ENCODE measurements at regions of chr5 and their contacts with region 1.

Region 1: DNA sequence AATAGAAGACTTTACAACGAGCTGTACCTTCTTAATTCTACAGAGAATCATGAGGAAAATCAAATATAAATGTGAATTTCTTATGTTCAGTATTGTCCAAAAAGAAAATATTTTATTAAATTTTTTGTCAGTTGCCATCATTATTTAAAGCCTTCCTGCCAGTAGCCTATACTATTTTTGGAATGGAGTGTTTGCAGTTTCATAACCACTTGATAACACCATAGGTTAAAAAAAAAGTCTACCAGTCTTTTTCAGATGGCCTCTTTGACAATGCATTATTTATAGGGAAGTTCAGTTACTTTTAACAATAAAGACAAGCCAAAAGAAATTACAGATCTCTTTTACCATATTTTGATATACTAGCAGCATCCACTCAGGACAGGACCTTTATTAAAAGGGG is 80.3 kb upstream of the CCDC152 start:
- DNase-seq: no peak
- ATAC-seq: no peak
- H3K4me3 ChIP-seq: no peak overlapping the region
- H3K27ac ChIP-seq: peak overlapping the region; percentile 56
- H3K4me1 ChIP-seq: peaks cover 19% of the 10 kb centered on the region
- H3K27me3 ChIP-seq: no peaks in the 10 kb centered on the region
- CTCF ChIP-seq: no peak

Region 2: DNA sequence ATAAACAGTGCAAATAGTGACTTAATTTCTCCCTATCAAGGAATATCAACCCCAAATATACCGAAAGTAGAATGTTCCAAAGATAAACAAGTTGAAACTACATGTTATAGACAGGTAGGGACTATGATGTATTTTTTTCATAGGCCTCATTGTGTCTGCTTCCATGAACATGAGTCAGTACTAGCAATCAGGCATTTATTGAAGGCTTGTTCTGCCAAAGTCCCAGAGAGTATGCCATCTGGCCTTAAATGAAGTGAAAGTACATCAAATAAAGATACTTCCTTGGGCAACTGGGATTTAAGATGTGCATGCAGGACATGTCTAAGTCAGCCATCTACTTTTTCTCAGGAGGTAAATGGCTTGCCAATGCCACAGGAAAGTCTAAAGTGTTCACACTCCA is 246.7 kb before region 1 on chr5:
- intact Hi-C with region 1: loop called in 1 of 2 experiments (anchors 5 kb)
- DNase-seq: no peak
- ATAC-seq: peak in 1 of 4 donors; percentile 17
- H3K4me3 ChIP-seq: no peak overlapping the region
- H3K27ac ChIP-seq: no peak overlapping the region
- H3K4me1 ChIP-seq: peaks cover 58% of the 10 kb centered on the region
- H3K27me3 ChIP-seq: no peaks in the 10 kb centered on the region
- CTCF ChIP-seq: no peak

Region 3: GRCh38 chr5:42621242-42621641 is 55.1 kb before region 1 on chr5:
- intact Hi-C with region 1: loop called in 1 of 2 experiments (anchors 10 kb)
- DNase-seq: no peak
- ATAC-seq: peak in 3 of 4 donors; percentile 10 to 32 (median 27)
- H3K4me3 ChIP-seq: no peak overlapping the region
- H3K27ac ChIP-seq: peak overlapping the region; percentile 61
- H3K4me1 ChIP-seq: peaks cover 48% of the 10 kb centered on the region
- H3K27me3 ChIP-seq: no peaks in the 10 kb centered on the region
- CTCF ChIP-seq: no peak